PC-9 (cell line): ENCODE measurements at regions of chr9 and their contacts with region 1.

Region 1: DNA sequence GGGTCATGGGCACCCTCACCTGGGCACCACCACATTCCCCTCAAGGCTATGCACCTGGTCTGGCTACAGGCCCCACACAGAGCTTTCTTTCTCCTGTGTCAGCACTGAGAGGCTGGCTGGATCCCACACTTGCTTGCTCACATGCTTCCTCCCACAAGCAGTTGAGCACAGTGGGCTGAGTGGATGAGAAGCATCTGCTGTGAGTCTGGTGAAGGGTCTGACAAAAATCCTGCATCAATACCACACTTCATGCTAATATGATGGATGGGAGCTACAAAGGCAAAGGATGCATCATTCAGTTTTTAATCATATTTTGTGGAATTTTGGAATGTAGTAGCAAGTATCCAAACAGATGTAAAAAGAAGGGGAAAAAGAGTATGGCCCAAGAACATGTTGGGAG is 830.8 kb upstream of the PTPRD start:
- DNase-seq: no peak
- H3K4me3 ChIP-seq: no peak overlapping the region
- H3K27ac ChIP-seq: no peak overlapping the region
- H3K4me1 ChIP-seq: no peaks in the 10 kb centered on the region
- H3K27me3 ChIP-seq: no peaks in the 10 kb centered on the region
- CTCF ChIP-seq: no peak

Region 2: DNA sequence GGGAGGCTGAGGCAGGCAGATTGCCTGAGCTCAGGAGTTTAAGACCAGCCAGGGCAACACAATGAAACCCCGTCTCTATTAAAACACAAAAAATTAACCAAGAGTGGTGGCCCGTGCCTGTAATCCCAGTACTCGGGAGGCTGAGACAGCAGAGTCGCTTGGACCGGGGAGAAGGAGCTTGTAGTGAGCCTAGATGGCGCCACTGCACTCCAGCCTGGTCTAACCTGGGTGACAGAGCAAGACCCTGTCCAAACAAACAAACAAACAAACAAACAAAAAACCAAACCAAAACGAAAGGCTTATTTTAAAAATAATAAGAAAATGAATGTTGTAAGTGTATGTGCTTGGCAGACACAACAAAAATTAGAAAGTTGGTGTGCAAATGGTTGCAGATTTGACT is 294.6 kb before region 1 on chr9:
- CTCF ChIA-PET with region 1: no interaction called
- POLR2A ChIA-PET with region 1: no interaction called
- intact Hi-C with region 1: no loop called
- DNase-seq: no peak
- H3K4me3 ChIP-seq: no peak overlapping the region
- H3K27ac ChIP-seq: no peak overlapping the region
- H3K4me1 ChIP-seq: no peaks in the 10 kb centered on the region
- H3K27me3 ChIP-seq: no peaks in the 10 kb centered on the region
- CTCF ChIP-seq: no peak

Region 3: DNA sequence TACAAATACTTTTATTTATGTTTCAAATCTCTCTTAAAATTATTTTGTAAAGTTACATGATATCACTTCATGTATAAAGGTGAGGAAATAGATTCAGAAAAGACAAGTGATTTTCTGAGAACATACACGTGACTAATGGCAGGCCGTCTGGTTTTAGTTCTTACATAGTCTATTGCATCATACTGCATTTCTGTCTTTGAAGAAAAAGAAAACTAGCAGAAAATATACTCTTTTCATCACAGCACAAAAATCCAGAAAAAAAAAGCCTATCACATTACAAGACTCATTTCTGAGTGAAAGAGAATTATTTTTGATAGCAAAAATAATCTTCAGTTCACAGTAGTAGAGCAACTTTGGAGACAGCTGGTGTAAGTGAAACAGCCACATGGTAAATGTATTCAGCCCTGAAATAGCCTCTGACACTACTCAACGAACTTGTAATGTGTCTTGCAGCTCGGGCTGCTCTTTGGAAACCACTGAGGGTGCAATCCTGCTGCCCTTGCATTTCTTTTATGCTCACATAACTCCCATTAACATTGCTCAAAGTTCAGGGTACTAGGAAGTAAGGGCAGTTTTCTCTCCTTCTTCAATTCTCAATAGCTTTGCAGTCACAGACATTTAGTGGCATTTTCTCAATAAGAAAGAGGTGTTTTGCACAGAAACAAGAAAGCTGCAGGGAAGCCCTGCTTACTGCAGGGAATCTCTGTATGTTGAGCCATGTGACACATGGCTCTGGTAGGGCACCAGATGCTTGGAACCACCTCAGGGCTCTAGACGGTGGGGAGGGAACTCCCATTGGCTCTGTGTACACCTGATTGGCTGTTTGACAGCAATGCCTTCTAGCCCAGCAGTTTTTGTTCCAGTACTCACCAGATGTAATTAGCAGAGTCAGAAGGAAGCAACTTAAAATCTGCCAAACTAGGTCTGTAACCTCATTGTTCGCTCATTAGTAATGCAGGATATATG is 14.5 kb after region 1 on chr9:
- CTCF ChIA-PET with region 1: interaction called, 12 read pairs
- POLR2A ChIA-PET with region 1: no interaction called
- intact Hi-C with region 1: no loop called
- DNase-seq: no peak
- H3K4me3 ChIP-seq: no peak overlapping the region
- H3K27ac ChIP-seq: no peak overlapping the region
- H3K4me1 ChIP-seq: no peaks in the 10 kb centered on the region
- H3K27me3 ChIP-seq: no peaks in the 10 kb centered on the region
- CTCF ChIP-seq: no peak